Activated CD4-positive, alpha-beta memory T cell treated with anti-CD3 and anti-CD28 coated beads, Interleukin-2, amount 10 ng/mL, durations not matched to agents 7 days and 5 days (primary cell): ENCODE measurements at regions of chr1 and their contacts with region 1.

Region 1: GRCh38 chr1:75785983-75786853 is at the start of gene RABGGTB:
- DNase-seq: peak; percentile 94
- H3K4me3 Mint-ChIP-seq: peak within 1 kb of the TSS; percentile 98
- H3K27ac Mint-ChIP-seq: peak within 1 kb of the TSS; percentile 92
- H3K4me1 Mint-ChIP-seq: peaks cover 43% of the 10 kb centered on the region
- H3K27me3 Mint-ChIP-seq: peaks cover 3% of the 10 kb centered on the region
- total RNA-seq, gene RABGGTB: 80.6 to 82.7 TPM

Region 2: DNA sequence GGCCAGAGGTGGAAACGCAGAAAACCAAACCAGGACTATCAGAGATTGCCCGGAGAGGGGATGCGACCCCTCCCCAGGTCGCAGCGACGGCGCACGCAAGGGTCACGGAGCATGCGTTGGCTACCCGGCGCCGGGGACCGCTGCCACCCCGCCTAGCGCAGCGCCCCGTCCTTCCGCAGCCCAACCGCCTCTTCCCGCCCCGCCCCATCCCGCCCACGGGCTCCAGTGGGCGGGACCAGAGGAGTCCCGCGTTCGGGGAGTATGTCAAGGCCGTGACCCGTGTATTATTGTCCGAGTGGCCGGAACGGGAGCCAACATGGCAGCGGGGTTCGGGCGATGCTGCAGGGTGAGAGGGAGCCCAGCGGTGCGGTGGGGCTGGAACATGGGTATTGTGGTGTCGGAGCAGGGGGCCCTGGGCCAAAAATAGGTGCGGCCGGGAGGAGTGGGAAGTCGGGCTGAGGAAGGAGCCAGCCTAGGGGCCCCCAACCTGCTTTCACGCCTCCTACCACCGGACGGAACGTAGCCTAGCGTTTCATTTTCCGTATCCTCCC is 61.7 kb before region 1 on chr1 and contains the start of gene ACADM:
- CTCF ChIA-PET with region 1: no interaction called
- POLR2A ChIA-PET with region 1: interaction called, 16 read pairs
- DNase-seq: peak; percentile 86
- H3K4me3 Mint-ChIP-seq: peak within 1 kb of the TSS; percentile 100
- H3K27ac Mint-ChIP-seq: peak within 1 kb of the TSS; percentile 94
- H3K4me1 Mint-ChIP-seq: peaks cover 35% of the 10 kb centered on the region
- H3K27me3 Mint-ChIP-seq: peaks cover 2% of the 10 kb centered on the region
- total RNA-seq, gene ACADM: 43.4 to 46.4 TPM

Region 3: DNA sequence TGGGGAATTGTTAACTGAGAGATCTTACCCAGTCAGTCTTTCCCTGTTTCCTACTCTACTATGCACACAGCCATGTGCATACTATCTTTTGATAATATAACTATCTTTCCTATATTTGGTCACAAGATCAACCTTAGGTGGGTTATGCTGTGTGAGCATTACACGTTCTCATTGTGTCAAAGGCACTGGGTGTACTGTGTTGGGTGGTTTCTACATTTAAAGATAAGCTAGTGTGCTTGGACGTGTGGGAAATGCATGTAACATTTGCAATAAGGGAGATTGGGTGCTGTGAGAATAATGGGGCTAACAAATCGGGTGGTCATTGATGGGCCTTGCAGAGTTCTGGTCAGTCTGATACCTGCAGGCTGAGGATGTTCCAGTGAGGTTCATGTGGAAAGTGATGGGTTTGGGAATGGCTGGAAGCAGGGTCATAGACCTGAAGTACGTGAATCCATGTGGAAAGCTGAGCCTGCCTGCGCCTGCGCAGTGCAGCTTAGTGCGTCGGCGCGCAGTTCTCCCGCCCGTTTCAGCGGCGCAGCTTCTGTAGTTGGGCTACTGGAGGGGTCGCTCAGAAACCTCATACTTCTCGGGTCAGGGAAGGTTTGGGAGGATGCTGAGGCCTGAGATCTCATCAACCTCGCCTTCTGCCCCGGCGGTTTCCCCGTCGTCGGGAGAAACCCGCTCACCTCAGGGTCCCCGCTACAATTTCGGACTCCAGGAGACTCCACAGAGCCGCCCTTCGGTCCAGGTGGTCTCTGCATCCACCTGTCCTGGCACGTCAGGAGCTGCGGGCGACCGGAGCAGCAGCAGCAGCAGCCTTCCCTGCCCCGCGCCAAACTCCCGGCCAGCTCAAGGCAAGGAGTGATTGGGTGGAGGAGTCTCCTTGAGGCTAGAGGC is 10.4 kb after region 1 on chr1 and contains the start of gene MSH4:
- CTCF ChIA-PET with region 1: no interaction called
- POLR2A ChIA-PET with region 1: interaction called, 30 read pairs
- DNase-seq: no peak
- H3K4me3 Mint-ChIP-seq: no peak within 1 kb of the TSS
- H3K27ac Mint-ChIP-seq: no peak within 1 kb of the TSS
- H3K4me1 Mint-ChIP-seq: peaks cover 17% of the 10 kb centered on the region
- H3K27me3 Mint-ChIP-seq: no peaks in the 10 kb centered on the region
- total RNA-seq, gene MSH4: 0.20 to 0.25 TPM